PC-3 (cell line): ENCODE measurements at regions of chr2 and their contacts with region 1.

Region 1: GRCh38 chr2:39994151-39994550 is 215.1 kb upstream of the THUMPD2 start:
- DNase-seq: peak; percentile 86
- ATAC-seq: peak; percentile 99
- H3K4me3 ChIP-seq: no peak overlapping the region
- H3K27ac ChIP-seq: no peak overlapping the region
- H3K4me1 ChIP-seq: peaks cover 37% of the 10 kb centered on the region
- H3K27me3 ChIP-seq: no peaks in the 10 kb centered on the region
- CTCF ChIP-seq: no peak

Region 2: GRCh38 chr2:40032650-40033319 is 38.6 kb after region 1 on chr2:
- CTCF ChIA-PET with region 1: no interaction called
- POLR2A ChIA-PET with region 1: no interaction called
- intact Hi-C with region 1: loop called (anchors 5 kb)
- DNase-seq: peak; percentile 85
- ATAC-seq: peak; percentile 80
- H3K4me3 ChIP-seq: no peak overlapping the region
- H3K27ac ChIP-seq: peak overlapping the region; percentile 51
- H3K4me1 ChIP-seq: peaks cover 16% of the 10 kb centered on the region
- H3K27me3 ChIP-seq: no peaks in the 10 kb centered on the region
- CTCF ChIP-seq: no peak

Region 3: DNA sequence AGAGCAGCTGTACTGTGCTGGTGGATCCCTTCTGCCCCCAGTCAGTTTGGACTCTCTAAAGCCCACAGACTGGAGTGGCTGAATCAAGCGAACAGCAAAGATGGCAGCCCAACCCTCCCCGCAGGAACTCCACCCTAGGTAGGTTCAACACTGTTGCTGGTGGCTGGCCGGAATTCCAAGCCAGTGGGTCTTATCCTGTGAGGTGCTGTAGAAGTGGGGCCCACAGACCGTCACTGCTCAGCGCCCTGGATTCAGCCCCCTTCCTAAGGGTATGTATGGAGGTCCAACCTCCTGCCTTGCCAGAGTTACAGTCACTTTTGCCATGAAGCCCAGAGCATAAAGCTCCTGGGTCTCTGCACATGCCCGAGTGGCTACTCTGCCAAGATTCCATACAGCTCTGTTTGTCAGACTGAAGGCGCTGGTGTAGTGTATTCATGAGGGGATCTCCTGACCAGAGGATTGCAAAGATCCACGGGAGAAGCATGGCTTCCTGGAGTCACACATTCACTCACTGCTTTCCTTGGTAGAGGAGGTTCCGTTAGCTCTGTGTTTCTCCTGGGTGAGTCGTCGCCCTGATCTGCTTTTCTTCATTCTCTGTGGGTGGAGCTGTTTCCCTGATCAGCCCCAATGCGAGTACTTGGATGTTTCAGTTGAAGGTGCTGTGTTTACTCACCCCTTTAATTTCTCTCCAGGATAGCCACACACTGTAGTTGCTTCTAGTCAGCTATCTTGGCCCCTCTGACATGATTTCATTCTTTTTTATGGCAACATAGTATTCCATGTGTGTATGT is 78.5 kb after region 1 on chr2:
- CTCF ChIA-PET with region 1: no interaction called
- POLR2A ChIA-PET with region 1: no interaction called
- intact Hi-C with region 1: no loop called
- DNase-seq: no peak
- ATAC-seq: no peak
- H3K4me3 ChIP-seq: no peak overlapping the region
- H3K27ac ChIP-seq: no peak overlapping the region
- H3K4me1 ChIP-seq: no peaks in the 10 kb centered on the region
- H3K27me3 ChIP-seq: no peaks in the 10 kb centered on the region
- CTCF ChIP-seq: no peak

Region 4: DNA sequence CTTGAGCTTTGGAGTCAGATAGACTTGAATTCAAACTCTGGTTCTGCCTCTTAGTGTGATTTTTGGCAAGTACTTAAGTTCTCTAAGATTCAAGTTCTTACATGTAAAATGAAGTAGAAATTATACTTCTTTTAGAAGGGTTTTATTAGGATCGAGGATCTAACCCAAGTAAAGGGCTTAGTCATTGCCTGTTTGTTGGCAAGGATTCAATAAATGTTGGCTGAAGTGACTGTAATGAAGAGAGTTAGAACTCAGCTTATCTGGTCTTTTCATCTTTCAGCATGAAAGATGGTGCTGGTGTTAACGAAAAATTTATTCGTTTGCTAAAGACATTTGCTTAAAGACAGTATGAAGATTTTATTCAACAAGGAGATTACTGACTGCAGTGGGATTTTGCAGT is 100.8 kb after region 1 on chr2:
- CTCF ChIA-PET with region 1: no interaction called
- POLR2A ChIA-PET with region 1: no interaction called
- intact Hi-C with region 1: loop called (anchors 5 kb)
- DNase-seq: peak; percentile 90
- ATAC-seq: peak; percentile 36
- H3K4me3 ChIP-seq: no peak overlapping the region
- H3K27ac ChIP-seq: no peak overlapping the region
- H3K4me1 ChIP-seq: peaks cover 56% of the 10 kb centered on the region
- H3K27me3 ChIP-seq: no peaks in the 10 kb centered on the region
- CTCF ChIP-seq: no peak